ENCODE measurements at regions of chr22 and their contacts with region 1.

Region 1: GRCh38 chr22:31096657-31097279 is 10.6 kb downstream of the SELENOM start:
- DNase-seq: no peak
- H3K4me3 ChIP-seq: no peak overlapping the region
- H3K27me3 ChIP-seq: no peaks in the 10 kb centered on the region
- CTCF ChIP-seq: no peak

Region 2: DNA sequence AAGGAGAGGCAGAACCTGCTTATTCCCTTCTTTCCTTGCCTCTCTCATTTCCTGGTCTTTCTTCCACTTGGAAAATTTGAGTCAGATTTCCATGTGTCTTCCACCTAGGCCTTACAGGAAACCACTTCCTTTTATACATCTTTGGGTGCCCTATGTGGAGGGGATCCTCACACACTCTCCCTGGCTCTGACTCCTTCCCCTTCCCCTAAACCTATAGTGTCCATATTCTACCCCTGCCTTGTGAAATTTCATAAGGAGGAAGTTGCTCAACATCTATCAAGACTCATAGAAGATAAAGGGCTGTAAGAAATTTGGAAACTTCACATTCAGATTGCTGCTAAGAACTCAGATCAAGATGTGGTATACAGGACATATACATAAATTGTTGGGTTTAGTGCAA is 107.3 kb before region 1 on chr22:
- CTCF ChIA-PET with region 1: no interaction called
- POLR2A ChIA-PET with region 1: no interaction called
- DNase-seq: no peak
- H3K4me3 ChIP-seq: no peak overlapping the region
- H3K27me3 ChIP-seq: no peaks in the 10 kb centered on the region
- CTCF ChIP-seq: no peak

Region 3: GRCh38 chr22:31127181-31127772 is 30.5 kb after region 1 on chr22:
- CTCF ChIA-PET with region 1: no interaction called
- POLR2A ChIA-PET with region 1: no interaction called
- DNase-seq: no peak
- H3K4me3 ChIP-seq: no peak overlapping the region
- H3K27me3 ChIP-seq: no peaks in the 10 kb centered on the region; the same call in 1 of the 2 replicates
- CTCF ChIP-seq: no peak

Region 4: GRCh38 chr22:31857247-31857646 is 760.5 kb after region 1 on chr22:
- CTCF ChIA-PET with region 1: no interaction called
- POLR2A ChIA-PET with region 1: interaction called, 13 read pairs
- DNase-seq: no peak
- H3K4me3 ChIP-seq: no peak overlapping the region
- H3K27me3 ChIP-seq: no peaks in the 10 kb centered on the region
- CTCF ChIP-seq: no peak

Measured in BJ (cell line).